Posterior vena cava (tissue), 2 donors: ENCODE measurements at regions of chr14 and their contacts with region 1.

Region 1: DNA sequence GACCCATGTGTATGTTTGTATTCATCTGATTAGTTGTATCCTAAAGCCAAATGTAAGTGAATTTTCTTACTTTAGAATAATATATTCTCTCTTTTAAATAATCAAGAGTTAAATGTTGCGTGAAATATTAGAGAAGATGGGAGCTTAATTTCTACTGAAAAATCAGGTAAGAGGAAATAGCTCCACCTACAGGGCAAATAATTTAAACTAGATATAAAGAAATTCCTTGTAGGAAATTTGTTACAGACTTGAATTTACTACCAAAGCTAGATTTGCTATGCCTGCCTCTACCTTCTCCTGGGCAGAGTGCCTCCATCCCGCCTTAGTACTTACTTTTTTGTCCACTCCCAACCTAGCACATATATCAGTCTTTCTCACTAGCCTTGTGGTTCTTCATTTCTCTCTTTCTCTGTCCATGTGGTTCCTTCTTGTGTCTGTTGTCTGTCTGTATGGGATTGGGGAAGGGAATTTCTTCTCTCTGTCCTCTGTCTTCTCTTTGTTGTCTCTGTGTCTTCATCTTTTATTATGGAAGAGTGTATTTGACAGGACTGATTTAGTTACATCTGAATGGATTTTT is 44.7 kb downstream of the PALS1 start:
- DNase-seq: no peak

Region 2: GRCh38 chr14:67166450-67166853 is 119.5 kb before region 1 on chr14:
- intact Hi-C with region 1: loop called (anchors 5 to 10 kb)
- DNase-seq: no peak